ENCODE measurements at regions of chr17 and their contacts with region 1.

Region 1: GRCh38 chr17:8222630-8223356 is 12.4 kb upstream of the AURKB start:
- DNase-seq: peak; percentile 82 to 94 (median 88)
- ATAC-seq: peak; percentile 48
- H3K4me3 ChIP-seq: peak overlapping the region; percentile 75
- H3K4me3 Mint-ChIP-seq: peak overlapping the region; percentile 98
- H3K27ac ChIP-seq: peak overlapping the region; percentile 89 to 95
- H3K27ac Mint-ChIP-seq: peak overlapping the region; percentile 99
- H3K4me1 ChIP-seq: peaks cover 75% of the 10 kb centered on the region
- H3K4me1 Mint-ChIP-seq: peaks cover 74% of the 10 kb centered on the region
- H3K27me3 ChIP-seq: no peaks in the 10 kb centered on the region
- H3K27me3 Mint-ChIP-seq: peaks cover 42% of the 10 kb centered on the region
- CTCF ChIP-seq: no peak

Region 2: GRCh38 chr17:8151123-8151640 is 71.6 kb before region 1 on chr17:
- CTCF ChIA-PET with region 1: interaction called, 3 read pairs
- POLR2A ChIA-PET with region 1: interaction called, 135 read pairs
- intact Hi-C with region 1: loop called in 1 of 2 experiments (anchors 1 kb)
- DNase-seq: peak; percentile 82 to 96 (median 90)
- ATAC-seq: peak; percentile 43
- H3K4me3 ChIP-seq: peak overlapping the region; percentile 75
- H3K4me3 Mint-ChIP-seq: peak overlapping the region; percentile 95
- H3K27ac ChIP-seq: peak overlapping the region; percentile 99 to 100
- H3K27ac Mint-ChIP-seq: no peak overlapping the region
- H3K4me1 ChIP-seq: peaks cover 85% of the 10 kb centered on the region
- H3K4me1 Mint-ChIP-seq: peaks cover 51% of the 10 kb centered on the region
- H3K27me3 ChIP-seq: no peaks in the 10 kb centered on the region
- H3K27me3 Mint-ChIP-seq: peaks cover 4% of the 10 kb centered on the region
- CTCF ChIP-seq: no peak

Region 3: GRCh38 chr17:8173056-8173870 is 49.5 kb before region 1 on chr17:
- CTCF ChIA-PET with region 1: interaction called, 7 read pairs
- POLR2A ChIA-PET with region 1: interaction called, 74 read pairs
- intact Hi-C with region 1: no loop called
- DNase-seq: peak in 13 of 14 experiments; percentile 56 to 95 (median 70)
- ATAC-seq: peak; percentile 81
- H3K4me3 ChIP-seq: peak overlapping the region; percentile 49
- H3K4me3 Mint-ChIP-seq: peak overlapping the region; percentile 90
- H3K27ac ChIP-seq: peak overlapping the region; percentile 95 to 98
- H3K27ac Mint-ChIP-seq: peak overlapping the region; percentile 99
- H3K4me1 ChIP-seq: peaks cover 48% of the 10 kb centered on the region
- H3K4me1 Mint-ChIP-seq: peaks cover 51% of the 10 kb centered on the region
- H3K27me3 ChIP-seq: no peaks in the 10 kb centered on the region
- H3K27me3 Mint-ChIP-seq: no peaks in the 10 kb centered on the region
- CTCF ChIP-seq: no peak

Region 4: GRCh38 chr17:8209909-8210760 is 12.7 kb before region 1 on chr17 and contains the start of gene AURKB:
- CTCF ChIA-PET with region 1: interaction called, 3 read pairs
- POLR2A ChIA-PET with region 1: interaction called, 109 read pairs
- intact Hi-C with region 1: loop called in 1 of 2 experiments (anchors 1 kb)
- DNase-seq: peak; percentile 84 to 97 (median 90)
- ATAC-seq: peak; percentile 100
- H3K4me3 ChIP-seq: peak within 1 kb of the TSS; percentile 76
- H3K4me3 Mint-ChIP-seq: peak within 1 kb of the TSS; percentile 90
- H3K27ac ChIP-seq: peak within 1 kb of the TSS; percentile 40 to 50
- H3K27ac Mint-ChIP-seq: peak within 1 kb of the TSS; percentile 27
- H3K4me1 ChIP-seq: peaks cover 16% of the 10 kb centered on the region
- H3K4me1 Mint-ChIP-seq: peaks cover 19% of the 10 kb centered on the region
- H3K27me3 ChIP-seq: no peaks in the 10 kb centered on the region
- H3K27me3 Mint-ChIP-seq: no peaks in the 10 kb centered on the region
- CTCF ChIP-seq: no peak
- total RNA-seq, gene AURKB: 0.56 to 1.4 TPM

Region 5: GRCh38 chr17:8288336-8289102 is 65.7 kb after region 1 on chr17 and contains the start of gene RANGRF:
- CTCF ChIA-PET with region 1: interaction called, 5 read pairs
- POLR2A ChIA-PET with region 1: interaction called, 18 read pairs
- intact Hi-C with region 1: loop called in 1 of 2 experiments (anchors 2 kb)
- DNase-seq: peak; percentile 60 to 89 (median 75)
- ATAC-seq: peak; percentile 96
- H3K4me3 ChIP-seq: peak within 1 kb of the TSS; percentile 98
- H3K4me3 Mint-ChIP-seq: peak within 1 kb of the TSS; percentile 98
- H3K27ac ChIP-seq: peak within 1 kb of the TSS; percentile 76 to 94
- H3K27ac Mint-ChIP-seq: peak within 1 kb of the TSS; percentile 95
- H3K4me1 ChIP-seq: peaks cover 45% of the 10 kb centered on the region
- H3K4me1 Mint-ChIP-seq: peaks cover 50% of the 10 kb centered on the region
- H3K27me3 ChIP-seq: no peaks in the 10 kb centered on the region
- H3K27me3 Mint-ChIP-seq: no peaks in the 10 kb centered on the region
- CTCF ChIP-seq: no peak
- total RNA-seq, gene RANGRF: 23.1 to 24.6 TPM

Region 6: GRCh38 chr17:8383143-8383822 is 160.5 kb after region 1 on chr17 and contains the start of gene RPL26:
- CTCF ChIA-PET with region 1: interaction called, 3 read pairs
- POLR2A ChIA-PET with region 1: no interaction called
- intact Hi-C with region 1: loop called in 1 of 2 experiments (anchors 5 kb)
- DNase-seq: peak; percentile 89 to 98 (median 93)
- ATAC-seq: peak; percentile 86
- H3K4me3 ChIP-seq: peak within 1 kb of the TSS; percentile 95
- H3K4me3 Mint-ChIP-seq: peak within 1 kb of the TSS; percentile 95
- H3K27ac ChIP-seq: peak within 1 kb of the TSS; percentile 72 to 76
- H3K27ac Mint-ChIP-seq: peak within 1 kb of the TSS; percentile 91
- H3K4me1 ChIP-seq: peaks cover 47% of the 10 kb centered on the region
- H3K4me1 Mint-ChIP-seq: peaks cover 64% of the 10 kb centered on the region
- H3K27me3 ChIP-seq: no peaks in the 10 kb centered on the region
- H3K27me3 Mint-ChIP-seq: no peaks in the 10 kb centered on the region
- CTCF ChIP-seq: peak; percentile 100
- total RNA-seq, gene RPL26: 2,959 to 3,104 TPM